ENCODE measurements at regions of chr5 and their contacts with region 1.

Region 1: GRCh38 chr5:162473041-162473714 is 405.6 kb downstream of the GABRG2 start:
- DNase-seq: no peak
- H3K4me3 ChIP-seq: no peak overlapping the region
- H3K27ac ChIP-seq: peak overlapping the region in 8 of 59 donors; percentile 2 to 56 (median 46)
- H3K27me3 ChIP-seq: no peaks in the 10 kb centered on the region
- CTCF ChIP-seq: no peak

Region 2: DNA sequence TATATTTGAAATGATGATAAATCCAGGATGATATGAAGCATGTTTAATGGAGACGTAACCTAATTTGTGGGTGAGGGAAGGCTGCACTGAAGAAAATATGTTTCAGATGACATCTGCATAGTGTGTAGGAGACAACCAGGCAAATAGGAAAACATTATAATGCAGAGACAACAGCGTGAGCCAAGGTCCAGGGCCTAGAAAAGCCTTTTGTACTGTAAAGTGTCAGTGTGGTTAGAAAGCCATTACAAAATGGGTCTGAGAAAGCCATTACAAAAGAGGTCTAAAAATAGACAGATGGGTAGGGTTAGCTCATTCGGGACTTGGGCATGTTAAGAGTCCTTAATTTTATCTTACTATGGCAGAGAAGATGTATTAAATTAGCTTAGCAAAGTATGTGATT is 420.5 kb before region 1 on chr5:
- intact Hi-C with region 1: no loop called
- DNase-seq: no peak
- H3K4me3 ChIP-seq: no peak overlapping the region
- H3K27ac ChIP-seq: no peak overlapping the region
- H3K27me3 ChIP-seq: no peaks in the 10 kb centered on the region
- CTCF ChIP-seq: no peak

Region 3: GRCh38 chr5:162429142-162429541 is 44.0 kb before region 1 on chr5:
- intact Hi-C with region 1: loop called in 1 of 2 experiments (anchors 2 kb)
- DNase-seq: no peak
- H3K4me3 ChIP-seq: no peak overlapping the region
- H3K27ac ChIP-seq: no peak overlapping the region
- H3K27me3 ChIP-seq: no peaks in the 10 kb centered on the region
- CTCF ChIP-seq: no peak

Region 4: DNA sequence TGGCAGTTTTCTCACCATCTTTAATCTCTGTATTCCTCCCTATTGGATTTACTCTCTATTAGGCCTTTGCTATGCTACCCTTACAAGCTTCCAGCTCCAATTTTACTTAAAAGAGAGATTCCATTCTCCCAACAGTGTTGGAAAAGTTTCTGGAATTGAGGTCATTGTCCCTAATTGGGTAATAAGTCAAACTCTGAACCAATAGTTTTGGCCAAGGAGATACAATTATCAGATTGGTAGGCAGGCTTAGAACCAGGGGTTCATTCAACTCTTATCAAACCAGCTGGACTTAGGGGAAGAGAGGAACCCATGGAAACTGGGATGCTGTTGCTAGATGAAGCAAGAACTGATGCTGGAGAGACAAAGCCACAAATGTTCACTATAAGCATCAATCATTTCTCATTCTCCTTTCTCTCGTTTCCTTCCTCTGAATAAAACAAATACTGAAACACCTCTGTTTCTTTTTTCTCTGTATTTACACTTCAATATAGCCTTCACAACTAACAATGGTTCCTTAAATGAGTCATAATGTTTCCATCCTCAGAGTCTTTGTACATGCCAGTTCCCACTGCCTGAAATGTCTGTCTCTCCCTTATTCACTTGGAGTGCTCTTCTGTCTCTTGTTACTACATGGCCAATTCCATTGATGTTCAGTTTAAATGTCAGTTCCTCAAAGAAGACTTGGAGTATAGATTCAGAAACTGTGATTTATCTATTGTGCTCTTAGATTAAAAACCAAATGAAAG is 181.7 kb after region 1 on chr5:
- intact Hi-C with region 1: no loop called
- DNase-seq: no peak
- H3K4me3 ChIP-seq: no peak overlapping the region
- H3K27ac ChIP-seq: no peak overlapping the region
- H3K27me3 ChIP-seq: no peaks in the 10 kb centered on the region
- CTCF ChIP-seq: no peak